ENCODE measurements at regions of chr9 and their contacts with region 1.

Region 1: DNA sequence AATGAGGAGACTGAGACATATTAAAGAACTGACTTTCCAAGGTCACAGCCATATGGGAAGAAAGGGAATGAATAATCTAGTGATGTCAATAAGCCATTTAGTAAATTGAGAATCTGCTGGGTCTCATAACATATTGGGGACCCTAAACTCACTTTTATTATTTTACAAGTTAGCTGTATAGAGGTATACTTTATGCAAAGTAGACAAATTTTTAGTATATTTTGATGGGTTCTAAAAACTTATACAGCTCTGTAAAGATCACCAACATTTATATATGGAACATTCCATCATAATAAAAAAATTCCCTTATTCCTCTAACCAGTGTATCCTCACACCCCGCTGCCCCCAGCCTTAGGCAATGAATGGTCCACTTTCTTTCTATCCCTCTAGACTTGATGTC is 35.7 kb upstream of the ZNF510 start:
- DNase-seq: no peak
- ATAC-seq: no peak
- H3K4me3 ChIP-seq: no peak overlapping the region
- H3K27ac ChIP-seq: no peak overlapping the region
- H3K4me1 ChIP-seq: no peaks in the 10 kb centered on the region
- H3K27me3 ChIP-seq: no peaks in the 10 kb centered on the region
- CTCF ChIP-seq: no peak

Region 2: GRCh38 chr9:96604004-96604319 is 209.6 kb before region 1 on chr9:
- intact Hi-C with region 1: no loop called
- DNase-seq: no peak
- ATAC-seq: peak in 3 of 4 donors; percentile 23 to 75 (median 44)
- H3K4me3 ChIP-seq: no peak overlapping the region
- H3K27ac ChIP-seq: no peak overlapping the region
- H3K4me1 ChIP-seq: no peaks in the 10 kb centered on the region
- H3K27me3 ChIP-seq: no peaks in the 10 kb centered on the region
- CTCF ChIP-seq: no peak

Region 3: DNA sequence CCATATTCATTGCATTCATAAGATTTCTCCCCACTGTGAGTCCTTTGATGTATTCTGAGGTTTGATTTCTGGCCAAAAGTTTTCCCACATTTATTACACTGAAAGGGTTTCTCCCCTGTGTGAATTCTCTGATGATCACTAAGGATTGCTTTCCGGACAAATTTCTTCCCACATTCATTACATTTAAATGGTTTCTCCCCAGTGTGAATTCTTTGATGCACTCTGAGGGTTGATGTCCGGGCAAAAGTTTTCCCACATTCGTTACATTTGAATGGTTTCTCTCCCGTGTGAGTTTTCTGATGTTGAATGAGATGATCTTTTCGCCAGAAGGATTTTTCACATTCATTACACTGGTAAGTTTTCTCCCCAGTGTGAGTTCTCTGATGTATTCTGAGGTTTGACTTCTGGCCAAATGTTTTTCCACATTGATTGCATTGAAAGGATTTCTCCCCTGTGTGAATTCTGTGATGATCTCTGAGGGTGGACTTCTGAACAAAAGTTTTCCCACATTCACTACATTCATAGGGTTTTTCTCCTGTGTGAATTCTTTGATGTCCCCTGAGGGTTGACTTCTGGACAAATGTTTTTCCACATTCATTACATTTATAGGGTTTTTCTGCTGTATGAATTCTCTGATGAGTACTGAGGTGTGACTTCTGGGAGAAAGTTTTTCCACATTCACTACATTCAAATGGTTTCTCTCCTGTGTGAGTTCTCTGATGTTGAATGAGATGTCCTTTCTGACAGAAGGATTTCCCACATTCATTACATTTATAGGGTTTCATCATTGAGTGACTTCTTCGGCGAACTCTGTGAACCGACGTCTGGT is 54.5 kb before region 1 on chr9:
- intact Hi-C with region 1: loop called in 1 of 3 experiments (anchors 10 kb)
- DNase-seq: no peak
- ATAC-seq: no peak
- H3K4me3 ChIP-seq: no peak overlapping the region
- H3K27ac ChIP-seq: no peak overlapping the region
- H3K4me1 ChIP-seq: no peaks in the 10 kb centered on the region
- H3K27me3 ChIP-seq: no peaks in the 10 kb centered on the region
- CTCF ChIP-seq: no peak

Measured in pancreas (tissue), 10 donors.